H1 (cell line): ENCODE measurements at regions of chr9 and their contacts with region 1.

Region 1: DNA sequence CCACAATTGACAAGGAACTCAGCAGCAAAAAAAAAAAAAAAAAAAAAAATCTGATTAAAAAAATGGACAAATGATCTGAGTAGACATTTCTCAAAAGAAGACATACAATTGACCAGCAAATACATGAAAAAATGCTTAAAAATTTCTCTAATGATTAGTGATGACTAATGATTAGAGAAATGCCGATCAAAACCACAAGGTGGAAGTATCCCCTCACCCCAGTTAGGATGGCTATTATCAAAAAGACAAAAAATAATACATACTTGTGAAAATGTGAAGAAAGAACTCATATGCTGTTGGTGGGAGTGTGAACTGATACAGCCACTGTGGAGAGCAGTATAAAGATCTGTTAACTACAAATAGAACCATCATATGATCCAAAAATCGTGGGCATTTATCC is 245.3 kb downstream of the OSTF1 start:
- DNase-seq: no peak
- H3K4me3 ChIP-seq: no peak overlapping the region
- H3K27ac ChIP-seq: no peak overlapping the region
- H3K4me1 ChIP-seq: no peaks in the 10 kb centered on the region
- H3K27me3 ChIP-seq: no peaks in the 10 kb centered on the region
- CTCF ChIP-seq: peak in 2 of 3 experiments; percentile 25 to 29; a peak in 2 of 4 replicates
- EP300 ChIP-seq: no peak
- POLR2A ChIP-seq: no peak
- RAD21 ChIP-seq: peak; percentile 61 to 80

Region 2: GRCh38 chr9:75130621-75131230 is 202.9 kb before region 1 on chr9:
- CTCF ChIA-PET with region 1: no interaction called
- POLR2A ChIA-PET with region 1: no interaction called
- DNase-seq: no peak
- H3K4me3 ChIP-seq: no peak overlapping the region
- H3K27ac ChIP-seq: no peak overlapping the region
- H3K4me1 ChIP-seq: no peaks in the 10 kb centered on the region
- H3K27me3 ChIP-seq: no peaks in the 10 kb centered on the region
- CTCF ChIP-seq: no peak
- EP300 ChIP-seq: no peak
- POLR2A ChIP-seq: no peak
- RAD21 ChIP-seq: no peak

Region 3: DNA sequence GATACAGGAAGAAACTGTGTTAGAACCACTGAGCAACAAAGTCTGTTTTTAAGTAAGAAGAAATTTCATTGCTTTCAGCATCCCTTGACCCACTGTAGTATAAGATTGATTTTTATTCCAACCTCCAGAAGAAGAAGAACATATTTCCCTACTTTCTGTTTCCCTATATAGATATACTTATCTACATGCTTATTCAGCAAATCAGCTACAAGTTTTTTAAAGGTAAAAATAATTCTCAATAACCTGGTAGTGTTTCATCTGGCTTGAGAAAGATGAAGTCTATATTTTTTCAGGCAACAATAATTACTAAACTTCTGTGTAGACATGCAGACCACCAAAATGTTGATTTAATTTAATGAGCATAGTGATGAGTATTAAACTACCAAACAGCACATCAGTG is 44.3 kb before region 1 on chr9:
- CTCF ChIA-PET with region 1: no interaction called
- POLR2A ChIA-PET with region 1: no interaction called
- DNase-seq: no peak
- H3K4me3 ChIP-seq: no peak overlapping the region
- H3K27ac ChIP-seq: no peak overlapping the region
- H3K4me1 ChIP-seq: no peaks in the 10 kb centered on the region
- H3K27me3 ChIP-seq: no peaks in the 10 kb centered on the region
- CTCF ChIP-seq: no peak
- EP300 ChIP-seq: no peak
- POLR2A ChIP-seq: no peak
- RAD21 ChIP-seq: no peak

Region 4: DNA sequence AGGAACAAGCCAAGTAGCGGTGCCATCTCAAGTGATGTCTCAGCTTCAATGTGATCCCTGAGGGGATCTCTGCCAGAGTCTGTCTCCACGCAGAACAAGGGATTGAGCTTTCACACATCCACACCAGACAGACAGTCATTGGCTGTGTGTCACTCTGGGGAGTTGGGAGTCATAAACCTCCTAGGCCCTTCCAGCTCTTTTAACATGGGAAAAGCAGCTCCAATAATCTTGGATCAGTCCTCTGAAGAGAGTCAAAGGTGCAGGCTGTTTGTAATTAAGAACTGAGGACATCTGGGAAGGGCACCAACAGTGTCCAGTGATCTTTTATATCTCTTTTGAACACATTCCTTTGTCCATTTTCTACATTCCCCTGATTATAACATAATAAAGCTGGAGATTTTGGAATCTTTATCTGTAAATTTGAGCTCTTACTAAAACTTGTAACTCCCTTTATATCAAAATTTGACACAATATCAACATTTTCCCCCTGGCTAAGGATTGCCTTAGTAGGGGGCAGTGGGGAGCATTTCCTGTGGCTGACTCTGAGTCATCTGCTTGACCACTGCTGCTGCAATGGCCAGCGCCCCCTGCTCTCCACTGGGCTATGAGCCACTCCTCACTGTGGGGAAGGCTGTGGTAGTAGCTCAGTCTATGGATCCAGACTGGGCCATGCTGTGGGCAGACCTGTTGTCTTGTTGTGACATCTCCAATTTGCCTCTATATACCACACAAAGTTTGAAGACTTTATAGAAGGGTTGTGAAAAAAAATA is 39.1 kb after region 1 on chr9:
- CTCF ChIA-PET with region 1: interaction called, 11 read pairs
- POLR2A ChIA-PET with region 1: no interaction called
- DNase-seq: no peak
- H3K4me3 ChIP-seq: no peak overlapping the region
- H3K27ac ChIP-seq: no peak overlapping the region
- H3K4me1 ChIP-seq: no peaks in the 10 kb centered on the region
- H3K27me3 ChIP-seq: no peaks in the 10 kb centered on the region
- CTCF ChIP-seq: no peak
- EP300 ChIP-seq: no peak
- POLR2A ChIP-seq: no peak
- RAD21 ChIP-seq: no peak